ENCODE measurements at regions of chr14 and their contacts with region 1.

Region 1: DNA sequence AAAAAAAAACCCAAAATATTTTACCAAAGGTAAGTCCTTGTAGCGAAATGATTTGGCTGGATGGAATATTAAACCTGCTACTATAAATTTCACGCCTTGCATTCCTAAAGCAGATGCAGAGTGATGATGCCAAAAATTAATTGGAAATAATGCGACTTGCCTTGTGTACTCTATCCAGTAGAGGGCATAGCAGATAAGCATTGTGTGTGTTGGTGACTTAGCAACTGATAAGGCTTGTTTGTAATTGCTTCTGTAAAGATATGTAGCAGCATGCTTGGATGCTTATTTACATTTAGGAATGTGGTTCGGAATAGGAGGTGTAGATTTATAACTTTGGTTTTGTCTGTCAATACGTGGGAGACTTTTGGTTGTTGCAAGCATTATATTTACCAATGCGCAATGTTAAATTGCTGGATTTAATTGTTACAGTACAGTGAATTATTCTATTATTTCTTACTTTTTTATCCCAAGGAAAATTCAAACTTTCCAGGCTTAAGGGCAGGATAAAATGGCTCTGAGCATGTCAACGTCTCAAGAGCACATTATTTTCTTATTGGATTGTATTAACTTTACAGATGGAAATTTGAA is 80.5 kb downstream of the TMEM260 start:
- DNase-seq: no peak
- ATAC-seq: peak; percentile 52

Region 2: DNA sequence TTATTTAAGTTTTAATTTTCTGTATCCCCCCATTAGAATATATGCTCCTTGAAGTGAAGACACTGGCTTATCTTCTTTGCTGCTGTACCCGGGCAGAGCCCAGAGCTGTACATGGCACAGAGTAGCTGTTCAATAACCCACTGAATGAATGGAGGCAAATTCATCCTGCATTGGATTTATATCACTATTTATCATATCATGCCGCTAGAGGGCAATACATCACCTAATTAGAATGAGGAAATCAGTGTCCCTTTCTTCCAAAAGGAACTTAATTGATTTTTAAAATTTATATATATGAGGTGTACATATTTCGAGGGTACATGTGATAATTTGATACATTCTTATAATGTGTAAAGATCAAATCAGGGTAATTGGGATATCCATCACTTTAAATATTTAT is 169.7 kb before region 1 on chr14:
- intact Hi-C with region 1: no loop called
- DNase-seq: no peak
- ATAC-seq: no peak

Region 3: GRCh38 chr14:57317316-57317715 is 657.3 kb after region 1 on chr14:
- intact Hi-C with region 1: loop called (anchors 10 kb)
- DNase-seq: no peak
- ATAC-seq: no peak